ENCODE measurements at regions of chr14 and their contacts with region 1.

Region 1: GRCh38 chr14:20413045-20413799 is at the start of gene TEP1:
- DNase-seq: peak; percentile 58
- ATAC-seq: peak; percentile 93
- H3K4me3 ChIP-seq: peak within 1 kb of the TSS; percentile 91 to 96
- H3K27ac ChIP-seq: peak within 1 kb of the TSS; percentile 98
- H3K4me1 ChIP-seq: peaks cover 11 to 41% of the 10 kb centered on the region in 2 experiments
- H3K27me3 ChIP-seq: no peaks in the 10 kb centered on the region
- CTCF ChIP-seq: no peak
- POLR2A ChIP-seq: no peak
- RAD21 ChIP-seq: no peak
- total RNA-seq, gene TEP1: 22.4 TPM

Region 2: DNA sequence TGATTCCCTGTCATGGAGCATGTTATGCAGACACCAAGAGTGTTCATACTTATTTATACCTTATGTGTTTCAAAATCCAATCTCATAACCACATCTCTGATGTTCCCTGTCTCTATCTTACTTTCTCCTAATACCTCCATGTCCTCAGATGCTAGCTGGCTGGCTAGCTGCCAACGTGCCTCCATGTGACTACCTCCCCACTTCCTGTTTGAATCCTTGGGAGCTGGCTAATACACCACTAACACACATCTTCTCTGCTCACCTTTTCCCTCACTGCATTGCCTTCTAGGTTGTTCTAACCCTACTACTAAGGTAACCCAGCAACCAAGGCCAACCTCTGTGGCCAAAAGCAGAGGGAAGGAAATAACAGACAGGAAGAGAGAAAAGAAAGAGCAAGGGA is 134.8 kb before region 1 on chr14:
- CTCF ChIA-PET with region 1: no interaction called
- POLR2A ChIA-PET with region 1: no interaction called
- RAD21 ChIA-PET with region 1: no interaction called
- intact Hi-C with region 1: no loop called
- DNase-seq: no peak
- ATAC-seq: no peak
- H3K4me3 ChIP-seq: no peak overlapping the region
- H3K27ac ChIP-seq: no peak overlapping the region
- H3K4me1 ChIP-seq: 0 out of 4 replicates have a peak, but pooled peaks cover 0 to 3% of the 10 kb centered on the region in 2 experiments
- H3K27me3 ChIP-seq: no peaks in the 10 kb centered on the region
- CTCF ChIP-seq: no peak
- POLR2A ChIP-seq: no peak
- RAD21 ChIP-seq: no peak

Region 3: DNA sequence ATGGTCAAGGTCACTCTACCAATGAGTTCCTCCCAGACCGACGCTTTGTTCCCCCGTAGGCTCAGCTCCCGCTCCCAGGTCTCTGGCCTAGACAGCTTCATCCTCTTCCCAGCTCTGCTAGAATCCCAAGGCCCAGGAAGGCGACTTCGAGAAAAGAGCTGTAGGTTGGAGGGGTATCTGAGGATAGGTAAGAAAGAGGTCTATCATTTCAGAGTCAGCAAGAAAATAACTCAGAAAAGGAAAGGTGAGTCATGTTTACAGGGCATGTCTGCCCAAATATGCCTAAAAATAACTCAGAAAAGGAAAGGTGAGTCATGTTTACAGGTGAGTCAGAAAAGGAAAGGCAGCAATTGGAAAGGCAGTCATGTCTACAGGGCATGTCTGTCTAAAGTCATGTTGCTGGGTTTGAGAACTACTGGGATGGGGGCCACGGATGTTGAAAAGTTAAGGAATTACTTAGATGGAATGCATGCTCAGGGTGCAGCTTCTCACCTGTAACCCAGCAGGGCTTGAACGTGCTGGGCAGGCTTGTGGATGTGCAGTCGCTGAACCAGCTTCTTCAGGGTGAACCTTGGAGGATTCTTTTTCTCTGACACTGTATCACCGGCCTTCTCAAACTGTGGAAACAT is 12.1 kb before region 1 on chr14:
- CTCF ChIA-PET with region 1: interaction called, 18 read pairs
- POLR2A ChIA-PET with region 1: interaction called, 15 read pairs
- RAD21 ChIA-PET with region 1: no interaction called
- intact Hi-C with region 1: no loop called
- DNase-seq: peak; percentile 74
- ATAC-seq: peak; percentile 94
- H3K4me3 ChIP-seq: peak overlapping the region; percentile 19 to 48
- H3K27ac ChIP-seq: peak overlapping the region; percentile 92
- H3K4me1 ChIP-seq: peaks cover 24 to 36% of the 10 kb centered on the region in 2 experiments
- H3K27me3 ChIP-seq: no peaks in the 10 kb centered on the region
- CTCF ChIP-seq: no peak
- POLR2A ChIP-seq: no peak
- RAD21 ChIP-seq: no peak

Region 4: GRCh38 chr14:20454516-20455354 is 41.5 kb after region 1 on chr14 and contains the starts of genes APEX1 and OSGEP:
- CTCF ChIA-PET with region 1: interaction called, 10 read pairs
- POLR2A ChIA-PET with region 1: interaction called, 8 read pairs
- RAD21 ChIA-PET with region 1: no interaction called
- intact Hi-C with region 1: loop called (anchors 2 kb)
- DNase-seq: peak; percentile 99
- ATAC-seq: peak; percentile 82
- H3K4me3 ChIP-seq: peak within 1 kb of the TSS; percentile 83 to 96
- H3K27ac ChIP-seq: peak within 1 kb of the TSS; percentile 97
- H3K4me1 ChIP-seq: peaks cover 12 to 16% of the 10 kb centered on the region in 2 experiments; a peak in 3 of 4 replicates
- H3K27me3 ChIP-seq: no peaks in the 10 kb centered on the region
- CTCF ChIP-seq: no peak
- POLR2A ChIP-seq: peak; percentile 59
- RAD21 ChIP-seq: no peak
- total RNA-seq, gene APEX1: 235 TPM
- total RNA-seq, gene OSGEP: 21.8 TPM